Left cardiac atrium (tissue), 4 donors: ENCODE measurements at regions of chr1 and their contacts with region 1.

Region 1: DNA sequence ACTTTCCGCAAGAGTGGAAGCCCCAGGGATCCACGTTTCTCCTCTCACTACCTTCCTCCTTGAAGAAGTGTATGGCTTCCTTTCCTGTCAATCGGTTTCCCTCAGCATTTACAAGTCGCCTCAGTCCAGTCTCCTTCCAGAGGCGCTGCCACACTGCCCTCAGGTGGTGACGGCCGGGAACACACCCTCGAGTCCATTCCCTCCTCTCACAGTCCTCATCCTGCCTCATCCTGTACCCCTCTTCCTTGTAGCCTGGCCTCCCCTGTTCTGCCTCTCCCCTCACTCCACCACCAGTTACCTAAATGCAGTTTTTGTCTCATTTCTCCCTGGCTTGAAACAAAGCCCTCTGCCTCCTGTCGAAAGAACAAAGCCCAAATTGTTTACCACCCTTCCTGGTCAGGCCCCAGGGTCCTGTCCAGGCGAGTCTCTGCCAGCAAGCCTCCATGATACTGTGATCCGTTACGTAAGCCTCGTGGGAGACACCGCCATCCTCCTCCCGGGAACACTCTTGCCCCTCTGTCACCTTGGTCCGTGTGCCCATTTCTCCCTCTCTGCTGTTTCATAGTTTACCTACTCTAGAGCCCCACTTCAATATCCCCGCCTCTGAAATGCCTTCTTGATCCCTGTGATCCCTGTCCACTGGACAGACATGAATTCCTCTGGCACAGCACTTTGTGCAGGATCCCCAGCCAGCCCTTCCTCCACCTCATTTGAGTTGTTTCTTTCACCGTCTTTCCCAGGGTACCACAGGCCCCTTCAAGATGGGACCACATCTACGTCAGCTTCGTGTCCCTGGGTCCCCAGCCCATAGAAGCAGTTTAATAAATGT is 23.3 kb upstream of the LSM10 start:
- DNase-seq: peak; percentile 87
- ATAC-seq: peak; percentile 92 to 93

Region 2: GRCh38 chr1:36099681-36100341 is 321.2 kb before region 1 on chr1:
- intact Hi-C with region 1: loop called (anchors 2 to 10 kb)
- DNase-seq: peak; percentile 81
- ATAC-seq: peak; percentile 83 to 91

Region 3: GRCh38 chr1:36149237-36149972 is 271.6 kb before region 1 on chr1 and contains the start of gene TRAPPC3:
- intact Hi-C with region 1: loop called in 1 of 2 experiments (anchors 5 kb)
- DNase-seq: peak; percentile 100
- ATAC-seq: peak; percentile 92 to 93
- total RNA-seq, gene TRAPPC3: 53.3 to 64.2 TPM

Region 4: DNA sequence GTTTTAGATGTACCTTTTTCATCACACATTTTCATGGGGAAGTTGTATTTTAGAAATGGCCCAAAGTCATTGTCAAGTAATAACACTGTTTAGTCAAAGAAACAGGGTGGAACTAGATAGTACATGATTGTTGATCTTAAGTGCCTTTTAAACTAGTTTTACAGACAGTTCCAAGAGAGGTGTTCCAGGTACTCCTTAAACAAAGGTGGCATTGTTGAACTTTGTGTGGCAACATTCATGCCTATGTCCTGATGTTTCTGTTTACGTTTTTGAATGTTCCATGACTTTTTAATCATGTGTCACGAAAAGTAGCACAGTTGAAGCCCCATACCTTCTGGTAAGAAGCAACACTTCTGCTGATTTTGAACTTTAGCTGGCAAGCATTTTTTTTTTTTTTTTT is 124.0 kb before region 1 on chr1:
- intact Hi-C with region 1: loop called in 1 of 2 experiments (anchors 5 kb)
- DNase-seq: no peak
- ATAC-seq: no peak

Region 5: DNA sequence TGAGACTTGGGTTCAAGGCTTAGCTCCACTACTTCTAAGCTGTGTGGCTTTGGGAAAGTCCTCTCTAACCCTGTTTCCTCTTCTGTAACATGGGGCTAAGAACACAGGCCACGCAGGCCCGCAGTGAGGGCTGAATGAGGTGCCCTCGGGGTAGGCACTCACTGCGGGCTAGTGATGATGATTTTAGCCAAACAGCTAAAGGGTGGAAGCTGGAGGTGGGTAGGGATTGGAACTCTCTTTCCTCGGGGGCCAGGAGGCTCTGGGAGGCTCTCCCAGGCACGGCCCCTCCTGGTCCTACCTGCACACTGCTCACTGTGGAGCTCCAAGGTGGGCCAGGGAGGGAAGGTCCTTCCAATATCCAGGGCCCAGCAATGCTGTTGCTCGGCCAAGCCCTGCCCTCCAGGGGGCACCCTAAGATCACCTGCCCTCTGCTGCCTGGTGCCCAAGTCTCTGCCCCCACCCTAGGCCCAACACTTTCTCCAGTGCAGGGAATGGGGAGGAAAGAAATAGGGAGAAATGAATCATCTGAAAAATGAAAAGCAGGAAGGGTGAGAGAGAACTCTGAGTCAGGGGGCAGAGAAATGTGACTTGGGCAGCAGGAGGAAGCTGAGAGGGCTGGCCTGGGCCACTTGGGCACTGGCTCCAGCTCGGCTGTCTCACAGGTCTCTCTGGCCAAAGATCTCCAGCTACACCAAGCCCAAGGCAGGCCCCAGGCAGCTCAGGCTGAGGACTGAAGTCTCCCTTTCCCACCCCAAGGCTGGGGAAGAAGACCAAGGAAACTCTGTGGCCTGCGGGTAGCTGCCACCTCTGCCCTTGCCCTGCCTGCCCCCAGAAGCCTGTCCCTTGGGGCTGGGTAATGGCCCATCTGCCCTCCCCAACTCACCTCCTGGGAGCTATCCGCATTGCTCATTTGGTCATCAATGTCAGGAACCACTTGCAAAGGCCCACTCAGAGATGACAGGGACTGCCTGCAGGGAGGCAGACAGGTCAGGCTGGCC is 78.3 kb before region 1 on chr1:
- intact Hi-C with region 1: loop called (anchors 2 to 10 kb)
- DNase-seq: no peak
- ATAC-seq: peak; percentile 62 to 67